ENCODE measurements at regions of chr19 and their contacts with region 1.

Region 1: DNA sequence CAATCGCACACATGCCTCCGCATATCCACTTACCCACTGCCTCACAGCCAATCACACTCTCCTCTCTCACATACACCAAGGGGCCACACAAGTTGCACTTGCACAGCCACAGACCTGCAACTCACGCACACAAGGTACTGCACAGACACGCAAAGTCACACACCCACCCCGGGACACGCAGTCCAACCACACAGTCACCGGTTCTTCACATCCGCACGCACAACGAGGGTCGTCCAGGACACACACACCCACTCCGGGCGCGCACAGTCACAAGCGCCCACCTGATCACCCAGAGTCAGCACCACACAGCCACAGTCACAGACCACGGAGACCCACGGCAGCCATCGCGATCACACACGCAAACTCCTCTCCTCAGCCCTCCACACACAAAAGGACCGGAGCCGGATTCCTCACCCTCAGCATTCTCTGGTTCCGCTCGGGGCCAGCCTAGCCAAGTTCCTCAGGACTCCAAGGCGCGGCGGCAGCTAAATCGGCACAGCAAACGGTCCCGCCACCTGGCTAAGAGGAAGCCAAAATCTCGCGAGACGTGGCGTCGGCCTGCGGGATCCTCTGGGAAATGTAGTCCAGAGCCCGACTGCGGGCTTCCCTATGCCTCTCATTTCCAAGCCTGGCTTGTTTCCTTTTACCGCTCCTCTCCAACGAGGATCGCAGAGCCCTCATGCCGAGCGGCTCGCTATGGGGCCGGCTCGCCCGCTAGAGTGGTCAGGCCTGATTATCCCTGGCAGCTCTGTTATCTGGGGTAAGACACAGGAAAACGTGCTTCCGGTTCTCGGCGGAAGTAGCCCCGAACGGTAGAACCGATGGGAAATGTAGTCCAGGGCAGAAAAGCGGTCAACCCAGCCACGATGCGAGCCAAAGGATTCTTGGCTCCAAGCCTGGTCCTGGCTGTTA is at the start of gene ZNF850:
- DNase-seq: peak; percentile 87
- ATAC-seq: peak; percentile 95
- H3K4me3 ChIP-seq: peak within 1 kb of the TSS; percentile 73 to 93 (median 78)
- H3K27ac ChIP-seq: peak within 1 kb of the TSS; percentile 79
- H3K4me1 ChIP-seq: 0 out of 2 replicates have a peak, but pooled peaks cover 5% of the 10 kb centered on the region
- H3K27me3 ChIP-seq: no peaks in the 10 kb centered on the region; a peak in 1 of 5 replicates
- CTCF ChIP-seq: no peak
- EP300 ChIP-seq: no peak
- POLR2A ChIP-seq: peak; percentile 49 to 65
- RAD21 ChIP-seq: no peak
- total RNA-seq, gene ZNF850: 6.6 and 11.4 TPM in 2 replicates

Region 2: DNA sequence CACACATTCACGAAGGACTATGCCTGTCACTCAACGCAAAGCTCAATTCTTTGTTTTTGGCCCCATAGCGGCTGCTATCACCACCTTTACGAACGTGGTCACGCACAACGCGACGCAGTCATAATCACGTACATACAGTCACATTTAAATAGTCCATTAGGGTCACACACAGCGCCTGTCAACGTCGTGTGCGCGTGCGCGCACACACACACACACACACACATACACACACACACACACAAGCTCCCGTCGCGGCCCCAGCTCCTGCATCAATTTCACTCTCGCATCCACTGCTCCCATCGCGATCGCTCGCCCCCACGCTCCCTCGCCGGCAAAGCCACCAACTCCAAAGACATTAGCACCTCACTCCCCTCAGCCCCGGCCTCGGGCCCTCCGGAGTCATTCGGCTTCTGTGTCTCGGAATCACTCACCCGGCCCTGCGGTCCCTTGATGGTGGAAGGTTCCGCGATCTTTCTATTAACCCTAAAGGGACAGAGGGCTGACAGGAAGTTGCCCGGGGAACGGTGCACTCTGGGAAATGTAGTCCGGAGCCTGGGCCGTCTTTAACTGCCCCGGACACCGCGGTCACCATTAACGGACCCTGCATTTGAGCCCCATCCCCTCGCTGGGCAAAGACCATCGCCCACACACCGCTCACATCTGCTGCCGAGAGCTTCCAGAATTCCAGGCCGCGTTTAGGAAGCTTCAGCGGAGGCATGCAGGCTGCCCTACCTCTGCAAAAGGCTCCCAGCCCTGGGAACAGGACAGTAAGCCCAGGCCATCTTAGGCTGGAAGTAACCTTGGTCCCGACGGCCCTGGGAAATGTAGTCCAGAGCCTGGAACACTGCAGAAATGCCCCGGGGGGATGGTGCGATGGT is 65.6 kb after region 1 on chr19 and contains the start of gene ZNF790:
- CTCF ChIA-PET with region 1: no interaction called
- POLR2A ChIA-PET with region 1: interaction called, 11 read pairs
- in situ Hi-C with region 1: no loop called
- intact Hi-C with region 1: no loop called
- DNase-seq: peak; percentile 89
- ATAC-seq: peak; percentile 96
- H3K4me3 ChIP-seq: peak within 1 kb of the TSS; percentile 77 to 85 (median 84)
- H3K27ac ChIP-seq: peak within 1 kb of the TSS; percentile 86
- H3K4me1 ChIP-seq: peaks cover 19% of the 10 kb centered on the region
- H3K27me3 ChIP-seq: no peaks in the 10 kb centered on the region; a peak in 1 of 5 replicates
- CTCF ChIP-seq: no peak
- EP300 ChIP-seq: 0 out of 4 replicates have a peak, but pooled peaks of 1 of the 2 experiments have one; percentile 16
- POLR2A ChIP-seq: peak; percentile 61 to 78; a peak in 3 of 4 replicates
- RAD21 ChIP-seq: 0 out of 2 replicates have a peak, but pooled peaks have one; percentile 23
- total RNA-seq, gene ZNF790: 5.3 and 8.5 TPM in 2 replicates